Ovary (tissue), 10 donors: ENCODE measurements at regions of chr2 and their contacts with region 1.

Region 1: DNA sequence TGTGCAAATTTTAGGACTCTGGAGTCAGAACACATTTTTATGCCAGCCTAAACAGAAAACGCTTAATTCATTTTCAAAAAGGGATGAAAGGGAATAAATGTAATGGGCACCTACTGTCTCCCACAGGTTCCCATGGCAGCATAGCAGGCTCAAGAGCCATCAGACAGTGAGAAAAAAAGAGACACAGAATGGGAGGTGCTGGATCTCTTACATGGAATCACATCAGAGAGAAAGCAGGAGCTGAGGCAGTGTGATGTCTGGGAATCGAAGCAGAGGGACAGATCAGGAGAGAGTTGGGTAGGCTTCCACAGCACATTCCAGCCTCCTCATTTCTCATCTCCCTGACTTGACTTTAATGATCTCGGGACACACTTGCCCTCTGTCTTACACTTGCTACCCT is 684.3 kb downstream of the KCNJ3 start:
- DNase-seq: no peak
- H3K4me3 ChIP-seq: no peak overlapping the region
- H3K27ac ChIP-seq: no peak overlapping the region
- H3K4me1 ChIP-seq: no peaks in the 10 kb centered on the region
- H3K27me3 ChIP-seq: no peaks in the 10 kb centered on the region
- CTCF ChIP-seq: no peak
- EP300 ChIP-seq: no peak
- POLR2A ChIP-seq: no peak

Region 2: GRCh38 chr2:155273323-155273722 is 109.5 kb before region 1 on chr2:
- intact Hi-C with region 1: no loop called
- DNase-seq: no peak
- H3K4me3 ChIP-seq: no peak overlapping the region
- H3K27ac ChIP-seq: no peak overlapping the region
- H3K4me1 ChIP-seq: no peaks in the 10 kb centered on the region
- H3K27me3 ChIP-seq: no peaks in the 10 kb centered on the region
- CTCF ChIP-seq: no peak
- EP300 ChIP-seq: no peak
- POLR2A ChIP-seq: no peak

Region 3: DNA sequence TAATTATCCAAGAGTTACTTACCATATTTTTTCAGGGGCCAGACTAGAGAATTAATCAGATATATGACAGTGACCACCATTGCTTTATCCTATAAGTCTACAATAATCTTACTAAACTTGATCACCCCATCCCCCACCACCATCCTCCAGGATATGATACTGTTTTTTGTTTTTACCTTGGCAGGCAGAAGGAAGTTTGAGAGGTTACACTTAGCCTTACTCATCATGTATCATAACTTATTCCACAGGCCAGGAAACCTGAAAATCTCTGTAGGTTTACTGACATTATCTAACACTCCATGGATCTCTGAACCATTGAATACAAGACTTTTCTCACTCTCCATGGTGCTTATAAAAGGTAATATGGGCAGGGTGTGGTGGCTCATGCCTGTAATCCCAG is 81.6 kb before region 1 on chr2:
- intact Hi-C with region 1: no loop called
- DNase-seq: no peak
- H3K4me3 ChIP-seq: no peak overlapping the region
- H3K27ac ChIP-seq: no peak overlapping the region
- H3K4me1 ChIP-seq: no peaks in the 10 kb centered on the region
- H3K27me3 ChIP-seq: no peaks in the 10 kb centered on the region
- CTCF ChIP-seq: no peak
- EP300 ChIP-seq: no peak
- POLR2A ChIP-seq: no peak

Region 4: DNA sequence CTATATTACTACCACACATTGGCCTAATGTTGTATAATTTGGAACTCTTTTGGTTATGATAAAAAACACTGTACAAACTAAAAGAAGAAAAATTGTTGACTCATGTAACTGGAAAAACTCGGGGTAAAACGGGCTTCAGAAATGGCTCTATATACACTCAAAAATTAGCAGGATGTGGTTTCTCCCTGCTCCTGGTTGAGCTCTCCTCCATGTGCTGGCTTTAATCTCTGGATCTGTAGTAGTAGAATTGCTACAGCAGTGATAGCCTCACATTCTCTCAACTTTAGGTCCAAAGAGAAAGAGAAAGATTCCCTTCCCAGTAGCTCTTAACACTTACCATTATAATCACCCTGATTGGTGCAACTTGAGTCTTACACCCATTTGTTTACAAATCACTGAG is 1599.8 kb after region 1 on chr2:
- intact Hi-C with region 1: loop called in 1 of 4 experiments (anchors 5 kb)
- DNase-seq: no peak
- H3K4me3 ChIP-seq: no peak overlapping the region
- H3K27ac ChIP-seq: no peak overlapping the region
- H3K4me1 ChIP-seq: no peaks in the 10 kb centered on the region
- H3K27me3 ChIP-seq: no peaks in the 10 kb centered on the region
- CTCF ChIP-seq: no peak
- EP300 ChIP-seq: no peak
- POLR2A ChIP-seq: no peak